Left cardiac atrium (tissue), 4 donors: ENCODE measurements at regions of chr9 and their contacts with region 1.

Region 1: DNA sequence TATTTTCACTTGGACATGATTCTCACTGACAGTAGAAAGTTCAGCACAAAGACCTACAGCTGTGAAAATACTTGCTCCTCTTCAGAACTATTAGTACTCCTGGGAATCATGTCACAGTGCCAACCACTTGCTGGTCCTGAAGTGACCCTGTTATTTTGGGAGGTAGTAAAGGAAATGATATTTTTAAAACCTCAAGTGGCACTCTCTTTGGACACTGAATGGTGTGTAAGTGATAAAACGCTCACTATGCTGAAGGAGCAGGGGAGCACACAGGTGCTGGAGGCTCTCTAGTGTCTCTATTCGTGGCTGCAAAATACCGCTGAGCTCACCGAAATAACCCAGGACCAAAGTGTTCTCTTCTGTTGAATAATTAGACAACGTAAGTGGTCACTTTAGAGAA is 76.9 kb upstream of the SPATA31D4 start:
- DNase-seq: no peak
- ATAC-seq: peak; percentile 73 to 94

Region 2: DNA sequence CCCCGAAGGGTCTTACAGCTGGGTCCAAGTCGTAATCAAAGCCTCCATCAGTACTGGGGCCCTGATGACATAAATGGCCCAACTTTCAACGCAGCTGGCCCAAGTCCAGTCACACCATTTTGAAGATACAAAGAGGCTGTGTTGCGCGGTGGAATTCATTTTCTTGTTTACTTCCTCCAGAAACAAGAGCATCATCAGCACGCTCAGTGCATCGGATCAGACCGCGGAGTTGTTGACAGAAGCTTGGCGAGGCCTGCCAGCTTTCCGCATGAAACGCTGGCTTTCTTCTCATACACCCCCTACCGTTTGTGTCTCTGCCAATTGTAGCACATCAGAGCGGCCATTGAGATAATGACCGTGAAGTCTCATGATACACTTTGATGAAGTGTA is 24.8 kb before region 1 on chr9:
- intact Hi-C with region 1: loop called in 1 of 2 experiments (anchors 1 kb)
- DNase-seq: peak; percentile 76
- ATAC-seq: peak; percentile 96 to 97

Region 3: DNA sequence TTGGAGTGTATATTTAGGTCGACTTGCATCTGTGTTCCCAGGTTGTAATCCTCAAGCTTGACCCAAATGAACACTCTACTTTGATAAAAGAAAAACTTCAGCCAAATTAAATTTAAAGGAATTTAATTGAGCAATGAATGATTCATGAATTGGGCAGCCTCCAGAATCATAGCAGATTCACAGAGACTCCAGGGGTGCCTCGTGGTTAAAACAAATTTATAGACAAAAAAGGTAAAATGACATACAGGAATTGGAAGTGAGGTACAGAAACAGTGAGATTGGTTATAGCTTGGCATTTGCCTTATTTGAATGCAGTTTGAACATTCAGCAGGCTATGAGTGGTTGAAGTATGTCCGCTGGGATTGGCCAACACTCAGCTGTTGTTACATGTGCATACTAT is 55.3 kb after region 1 on chr9:
- intact Hi-C with region 1: no loop called
- DNase-seq: no peak
- ATAC-seq: peak in 1 of 2 donors; percentile 39